Activated B cell treated with CpG ODN at 0.5 μM for 24 hours (primary cell): ENCODE measurements at regions of chr19 and their contacts with region 1.

Region 1: GRCh38 chr19:35404879-35405622 is 34.2 kb downstream of the GPR42 start:
- DNase-seq: no peak
- ATAC-seq: no peak
- H3K4me3 Mint-ChIP-seq: no peak overlapping the region
- H3K27ac Mint-ChIP-seq: no peak overlapping the region
- H3K4me1 Mint-ChIP-seq: peaks cover 17% of the 10 kb centered on the region
- H3K27me3 Mint-ChIP-seq: no peaks in the 10 kb centered on the region
- CTCF ChIP-seq: no peak

Region 2: GRCh38 chr19:35417713-35418534 is 12.9 kb after region 1 on chr19:
- CTCF ChIA-PET with region 1: no interaction called
- POLR2A ChIA-PET with region 1: no interaction called
- intact Hi-C with region 1: no loop called
- DNase-seq: no peak
- ATAC-seq: no peak
- H3K4me3 Mint-ChIP-seq: no peak overlapping the region
- H3K27ac Mint-ChIP-seq: no peak overlapping the region
- H3K4me1 Mint-ChIP-seq: peaks cover 11% of the 10 kb centered on the region
- H3K27me3 Mint-ChIP-seq: peaks cover 20% of the 10 kb centered on the region
- CTCF ChIP-seq: no peak

Region 3: GRCh38 chr19:35442091-35442490 is 37.0 kb after region 1 on chr19:
- CTCF ChIA-PET with region 1: no interaction called
- POLR2A ChIA-PET with region 1: no interaction called
- intact Hi-C with region 1: loop called (anchors 5 kb)
- DNase-seq: no peak
- ATAC-seq: peak; percentile 50
- H3K4me3 Mint-ChIP-seq: peak overlapping the region; percentile 50
- H3K27ac Mint-ChIP-seq: no peak overlapping the region
- H3K4me1 Mint-ChIP-seq: peaks cover 36% of the 10 kb centered on the region
- H3K27me3 Mint-ChIP-seq: no peaks in the 10 kb centered on the region
- CTCF ChIP-seq: no peak